Spleen (tissue), 13 donors: ENCODE measurements at regions of chr11 and their contacts with region 1.

Region 1: DNA sequence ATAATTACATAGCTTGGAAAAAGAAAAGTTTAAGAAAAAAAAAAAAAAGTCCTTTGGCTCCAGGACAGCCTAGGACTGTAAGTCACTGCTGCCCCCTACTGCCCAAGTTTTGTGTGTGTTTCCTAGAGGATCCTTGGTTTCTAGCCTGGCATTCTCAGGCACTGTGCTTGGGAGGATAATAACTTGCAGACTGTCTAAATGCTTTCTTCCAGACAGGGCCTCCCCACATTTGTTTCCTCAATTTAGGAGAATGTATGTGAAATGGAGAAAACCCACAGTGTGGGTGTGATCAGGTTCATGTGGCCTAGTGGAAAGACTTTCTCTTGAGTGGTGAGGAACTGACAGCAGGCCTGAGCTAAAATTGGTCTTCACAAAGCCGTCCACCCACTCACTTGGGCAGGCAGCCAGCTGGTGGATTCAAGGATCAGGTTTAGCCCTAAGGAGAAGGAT is 191.0 kb downstream of the NAV2 start:
- DNase-seq: no peak
- H3K4me3 ChIP-seq: no peak overlapping the region
- H3K27ac ChIP-seq: no peak overlapping the region
- H3K4me1 ChIP-seq: peaks cover 0 to 8% (median 0%) of the 10 kb centered on the region in 6 donors
- H3K27me3 ChIP-seq: no peaks in the 10 kb centered on the region
- CTCF ChIP-seq: peak in 10 of 11 experiments; percentile 50 to 80 (median 63)
- POLR2A ChIP-seq: no peak

Region 2: DNA sequence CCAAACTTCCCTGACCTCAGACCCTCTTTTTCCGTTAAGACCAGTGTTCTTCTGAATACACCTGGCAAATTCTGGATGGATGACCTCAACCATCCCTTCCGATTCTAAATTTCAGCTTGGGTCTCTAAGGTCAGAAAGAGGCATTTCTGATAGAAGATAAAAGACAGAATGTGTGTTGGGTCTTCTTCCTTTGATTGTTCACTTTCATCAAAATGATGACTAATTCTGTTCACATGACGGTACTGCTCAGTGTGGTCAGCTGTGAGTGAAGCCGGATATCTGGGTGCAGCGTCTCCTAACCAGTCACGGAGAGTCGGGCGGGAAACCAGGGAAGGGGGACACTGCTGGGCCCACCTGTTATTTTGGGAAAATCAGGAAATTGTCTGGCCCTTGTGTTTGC is 342.6 kb before region 1 on chr11:
- intact Hi-C with region 1: loop called (anchors 5 kb)
- DNase-seq: no peak
- H3K4me3 ChIP-seq: no peak overlapping the region
- H3K27ac ChIP-seq: no peak overlapping the region
- H3K4me1 ChIP-seq: peaks cover 0 to 15% (median 6%) of the 10 kb centered on the region in 6 donors
- H3K27me3 ChIP-seq: peaks cover 0 to 26% (median 0%) of the 10 kb centered on the region in 7 donors
- CTCF ChIP-seq: no peak
- POLR2A ChIP-seq: no peak

Region 3: GRCh38 chr11:19769820-19770219 is 133.8 kb before region 1 on chr11:
- intact Hi-C with region 1: loop called (anchors 10 kb)
- DNase-seq: no peak
- H3K4me3 ChIP-seq: no peak overlapping the region
- H3K27ac ChIP-seq: no peak overlapping the region
- H3K4me1 ChIP-seq: no peaks in the 10 kb centered on the region
- H3K27me3 ChIP-seq: peaks cover 0 to 9% (median 0%) of the 10 kb centered on the region in 7 donors
- CTCF ChIP-seq: no peak
- POLR2A ChIP-seq: no peak

Region 4: DNA sequence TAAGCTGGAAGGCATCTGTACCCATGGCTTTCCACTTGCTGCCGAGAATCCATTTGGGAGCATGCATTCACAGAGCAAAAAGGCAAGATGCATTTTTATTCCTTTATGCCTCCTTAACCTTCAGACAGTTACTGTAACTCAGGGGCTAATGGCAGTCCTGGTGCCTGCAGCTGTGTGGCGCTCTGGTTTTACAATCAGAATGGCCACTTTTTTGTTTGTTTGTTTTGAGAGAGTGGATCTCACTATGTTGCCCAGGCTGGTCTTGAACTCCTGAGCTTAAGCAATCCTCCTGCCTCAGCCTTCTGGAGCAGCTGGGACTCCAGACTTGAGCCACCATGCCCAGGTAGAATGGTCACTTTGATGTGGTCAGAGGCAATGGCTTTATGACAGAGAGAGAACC is 89.2 kb before region 1 on chr11:
- intact Hi-C with region 1: no loop called
- DNase-seq: no peak
- H3K4me3 ChIP-seq: no peak overlapping the region
- H3K27ac ChIP-seq: no peak overlapping the region
- H3K4me1 ChIP-seq: peaks cover 0 to 11% (median 5%) of the 10 kb centered on the region in 6 donors
- H3K27me3 ChIP-seq: no peaks in the 10 kb centered on the region
- CTCF ChIP-seq: no peak
- POLR2A ChIP-seq: no peak